Heart right ventricle (tissue), 16 donors: ENCODE measurements at regions of chr1 and their contacts with region 1.

Region 1: GRCh38 chr1:46026531-46026930 is 105.9 kb downstream of the PIK3R3 start:
- DNase-seq: peak in 1 of 2 donors; percentile 73
- ATAC-seq: peak; percentile 65 to 86 (median 76)
- H3K4me3 ChIP-seq: no peak overlapping the region
- H3K27ac ChIP-seq: peak overlapping the region; percentile 15 to 86 (median 80)
- H3K4me1 ChIP-seq: peaks cover 2 to 42% (median 29%) of the 10 kb centered on the region in 9 donors
- H3K27me3 ChIP-seq: no peaks in the 10 kb centered on the region
- CTCF ChIP-seq: no peak

Region 2: GRCh38 chr1:45924736-45925135 is 101.8 kb before region 1 on chr1:
- intact Hi-C with region 1: loop called in 2 of 10 experiments (anchors 5 to 10 kb)
- DNase-seq: no peak
- ATAC-seq: peak in 1 of 8 donors; percentile 37
- H3K4me3 ChIP-seq: no peak overlapping the region
- H3K27ac ChIP-seq: no peak overlapping the region
- H3K4me1 ChIP-seq: peaks cover 0 to 60% (median 18%) of the 10 kb centered on the region in 9 donors
- H3K27me3 ChIP-seq: no peaks in the 10 kb centered on the region
- CTCF ChIP-seq: no peak